AG04449 (cell line): ENCODE measurements at regions of chr10 and their contacts with region 1.

Region 1: GRCh38 chr10:114550756-114551635 is 107.1 kb downstream of the ABLIM1 start:
- DNase-seq: no peak
- H3K4me3 ChIP-seq: no peak overlapping the region
- CTCF ChIP-seq: no peak

Region 2: GRCh38 chr10:114561008-114561532 is 10.1 kb after region 1 on chr10:
- CTCF ChIA-PET with region 1: interaction called, 31 read pairs
- POLR2A ChIA-PET with region 1: no interaction called
- DNase-seq: no peak
- H3K4me3 ChIP-seq: no peak overlapping the region
- CTCF ChIP-seq: no peak

Region 3: GRCh38 chr10:114694752-114695151 is 143.8 kb after region 1 on chr10:
- CTCF ChIA-PET with region 1: interaction called, 20 read pairs
- POLR2A ChIA-PET with region 1: no interaction called
- DNase-seq: no peak
- H3K4me3 ChIP-seq: no peak overlapping the region
- CTCF ChIP-seq: peak; percentile 44

Region 4: DNA sequence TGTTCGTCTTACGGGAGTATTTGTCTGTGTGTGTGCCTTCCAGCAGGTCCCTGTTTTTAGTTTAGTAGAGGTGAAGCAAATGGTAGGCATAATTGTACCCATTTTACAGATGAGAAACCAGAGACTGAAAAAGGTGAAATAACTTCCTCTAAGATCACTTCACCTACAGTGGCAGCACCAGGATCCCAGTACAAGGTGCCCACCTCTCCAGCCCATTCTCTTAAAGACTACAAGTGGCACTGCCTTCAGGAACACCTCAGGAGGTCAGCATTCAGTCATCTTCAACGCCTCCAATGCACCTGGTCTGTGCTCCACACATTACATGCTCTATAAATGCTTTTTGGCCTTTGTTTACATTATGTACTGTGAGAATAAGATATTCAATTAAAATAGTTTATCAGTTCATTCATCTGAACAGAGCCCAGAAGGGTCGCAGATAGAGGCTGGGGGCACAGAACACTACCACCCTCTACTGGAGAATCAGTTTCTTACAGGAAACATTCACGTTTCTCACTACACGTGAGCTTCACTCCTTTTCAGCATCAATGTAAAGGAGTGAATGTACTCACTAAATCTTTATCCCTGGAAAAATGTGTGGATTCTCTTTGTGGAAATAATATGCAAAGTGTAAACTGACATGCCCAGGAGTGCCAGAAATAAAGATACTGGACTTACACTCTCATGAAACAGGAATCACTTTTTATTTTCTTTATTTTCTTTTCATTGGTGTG is 152.5 kb after region 1 on chr10:
- CTCF ChIA-PET with region 1: interaction called, 94 read pairs
- POLR2A ChIA-PET with region 1: interaction called, 4 read pairs
- DNase-seq: no peak
- H3K4me3 ChIP-seq: no peak overlapping the region
- CTCF ChIP-seq: peak; percentile 34

Region 5: GRCh38 chr10:114779803-114780609 is 229.0 kb after region 1 on chr10:
- CTCF ChIA-PET with region 1: interaction called, 121 read pairs
- POLR2A ChIA-PET with region 1: no interaction called
- DNase-seq: peak; percentile 67
- H3K4me3 ChIP-seq: no peak overlapping the region
- CTCF ChIP-seq: no peak

Region 6: GRCh38 chr10:115355162-115355760 is 804.3 kb after region 1 on chr10:
- CTCF ChIA-PET with region 1: no interaction called
- POLR2A ChIA-PET with region 1: no interaction called
- DNase-seq: peak; percentile 23
- H3K4me3 ChIP-seq: no peak overlapping the region
- CTCF ChIP-seq: peak; percentile 58